PC-3 (cell line): ENCODE measurements at regions of chr6 and their contacts with region 1.

Region 1: GRCh38 chr6:90285611-90286381 is 10.8 kb downstream of the BACH2 start:
- DNase-seq: peak; percentile 80
- ATAC-seq: peak; percentile 87
- H3K4me3 ChIP-seq: peak overlapping the region; percentile 74; the same call in 1 of the 2 replicates
- H3K27ac ChIP-seq: peak overlapping the region; percentile 98
- H3K4me1 ChIP-seq: peaks cover 41% of the 10 kb centered on the region
- H3K27me3 ChIP-seq: no peaks in the 10 kb centered on the region
- CTCF ChIP-seq: no peak

Region 2: DNA sequence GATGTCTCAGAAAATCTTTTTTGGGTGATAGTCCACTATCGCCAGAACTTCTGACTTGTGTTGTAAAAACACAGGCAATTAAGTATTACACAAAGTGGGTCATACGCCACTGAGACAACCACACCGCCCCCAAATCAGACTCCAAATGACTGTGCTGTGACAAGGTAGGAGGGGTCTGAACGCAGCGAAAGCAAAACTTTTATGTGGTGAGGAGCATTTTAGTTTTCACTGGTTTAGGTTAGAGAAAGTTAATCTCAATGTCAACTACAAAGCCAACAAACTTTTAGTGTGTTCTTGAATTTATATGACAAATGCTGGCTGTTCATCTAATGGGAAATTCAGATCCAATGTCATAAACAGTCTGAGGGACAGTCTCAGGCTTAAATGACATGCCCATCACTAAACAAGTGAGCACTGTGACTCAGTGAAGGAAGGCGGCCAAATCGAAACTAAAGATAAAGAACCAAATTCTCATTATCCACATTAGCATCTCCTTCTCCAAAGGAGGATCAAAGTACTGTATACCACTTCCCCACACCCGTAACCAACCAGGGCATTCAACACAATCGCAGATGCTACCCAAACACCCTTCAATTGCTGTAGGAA is 204.8 kb before region 1 on chr6:
- CTCF ChIA-PET with region 1: no interaction called
- POLR2A ChIA-PET with region 1: no interaction called
- intact Hi-C with region 1: loop called (anchors 10 kb)
- DNase-seq: no peak
- ATAC-seq: no peak
- H3K4me3 ChIP-seq: no peak overlapping the region
- H3K27ac ChIP-seq: no peak overlapping the region
- H3K4me1 ChIP-seq: peaks cover 3% of the 10 kb centered on the region
- H3K27me3 ChIP-seq: no peaks in the 10 kb centered on the region
- CTCF ChIP-seq: no peak

Region 3: DNA sequence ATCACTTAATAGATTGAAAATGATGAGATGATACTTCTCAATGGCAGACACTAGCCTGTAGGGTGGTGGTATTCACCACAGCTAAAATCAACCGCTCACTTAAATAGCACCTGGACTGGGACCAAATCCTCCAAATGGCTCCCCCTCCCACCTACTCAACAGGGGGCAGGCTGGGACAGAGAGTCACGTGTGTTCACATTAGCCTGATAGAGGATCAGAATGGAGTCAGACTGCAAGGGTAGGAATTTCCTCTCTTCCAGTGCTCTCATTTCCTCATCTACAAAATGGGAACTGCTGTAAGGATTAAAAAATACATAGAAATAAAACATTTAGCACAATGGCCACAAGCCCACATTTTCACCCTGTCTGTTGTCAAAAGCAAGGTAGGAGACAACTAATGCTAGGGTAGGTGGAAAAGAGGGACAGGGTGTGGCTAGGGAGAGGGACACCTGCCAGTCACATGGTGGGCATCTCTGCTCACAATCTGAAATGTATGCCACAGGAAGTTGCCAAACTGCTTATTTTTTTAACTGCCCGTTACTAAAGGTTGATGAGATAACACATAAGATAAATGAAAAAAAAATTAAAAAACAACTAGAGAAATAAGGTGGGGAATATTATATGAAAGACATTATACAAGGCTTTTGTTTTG is 44.4 kb before region 1 on chr6:
- CTCF ChIA-PET with region 1: no interaction called
- POLR2A ChIA-PET with region 1: no interaction called
- intact Hi-C with region 1: no loop called
- DNase-seq: no peak
- ATAC-seq: no peak
- H3K4me3 ChIP-seq: no peak overlapping the region
- H3K27ac ChIP-seq: no peak overlapping the region
- H3K4me1 ChIP-seq: peaks cover 22% of the 10 kb centered on the region
- H3K27me3 ChIP-seq: no peaks in the 10 kb centered on the region
- CTCF ChIP-seq: no peak

Region 4: GRCh38 chr6:90251295-90251992 is 34.4 kb before region 1 on chr6:
- CTCF ChIA-PET with region 1: no interaction called
- POLR2A ChIA-PET with region 1: no interaction called
- intact Hi-C with region 1: no loop called
- DNase-seq: no peak
- ATAC-seq: no peak
- H3K4me3 ChIP-seq: no peak overlapping the region
- H3K27ac ChIP-seq: peak overlapping the region; percentile 18; the same call in 1 of the 2 replicates
- H3K4me1 ChIP-seq: peaks cover 11% of the 10 kb centered on the region; the same call in 1 of the 2 replicates
- H3K27me3 ChIP-seq: no peaks in the 10 kb centered on the region
- CTCF ChIP-seq: no peak

Region 5: DNA sequence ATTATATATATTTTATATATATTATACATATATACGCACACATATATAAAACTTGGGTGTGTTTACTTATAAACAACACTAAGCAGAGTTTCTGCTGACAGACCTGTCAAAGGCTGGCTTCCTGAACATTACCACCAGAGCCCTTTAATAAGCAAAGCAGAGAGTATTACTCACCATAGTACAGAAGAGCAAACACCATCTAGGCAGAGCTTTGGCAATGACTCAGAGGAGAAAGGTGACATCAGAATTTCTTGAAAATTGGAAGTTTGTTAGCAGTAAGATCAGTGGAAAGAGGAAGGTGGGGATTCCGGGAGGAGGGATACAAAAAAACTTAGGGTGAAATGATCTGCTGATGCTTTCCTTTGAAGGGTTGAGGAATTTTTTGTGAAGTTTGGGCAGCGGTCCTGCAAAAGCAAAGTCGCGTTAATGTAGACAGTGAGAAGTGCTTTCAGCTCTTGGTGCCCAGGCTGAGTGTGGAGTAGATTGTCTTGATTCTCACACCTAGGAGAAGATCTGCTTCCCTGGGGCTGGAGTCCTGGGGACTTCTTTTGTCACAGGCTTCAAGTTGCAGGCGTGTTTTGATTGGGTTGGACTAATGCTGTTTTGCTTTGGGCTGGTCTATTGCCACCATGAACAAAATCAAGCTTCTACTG is 120.5 kb after region 1 on chr6:
- CTCF ChIA-PET with region 1: no interaction called
- POLR2A ChIA-PET with region 1: no interaction called
- intact Hi-C with region 1: loop called (anchors 5 kb)
- DNase-seq: peak; percentile 90
- ATAC-seq: peak; percentile 99
- H3K4me3 ChIP-seq: no peak overlapping the region
- H3K27ac ChIP-seq: peak overlapping the region; percentile 82
- H3K4me1 ChIP-seq: peaks cover 48% of the 10 kb centered on the region
- H3K27me3 ChIP-seq: no peaks in the 10 kb centered on the region
- CTCF ChIP-seq: no peak